Cardiac septum (tissue), 1 donor: ENCODE measurements at regions of chr14 and their contacts with region 1.

Region 1: GRCh38 chr14:66483322-66483721 is 2.8 kb upstream of the CCDC196 start:
- DNase-seq: no peak

Region 2: DNA sequence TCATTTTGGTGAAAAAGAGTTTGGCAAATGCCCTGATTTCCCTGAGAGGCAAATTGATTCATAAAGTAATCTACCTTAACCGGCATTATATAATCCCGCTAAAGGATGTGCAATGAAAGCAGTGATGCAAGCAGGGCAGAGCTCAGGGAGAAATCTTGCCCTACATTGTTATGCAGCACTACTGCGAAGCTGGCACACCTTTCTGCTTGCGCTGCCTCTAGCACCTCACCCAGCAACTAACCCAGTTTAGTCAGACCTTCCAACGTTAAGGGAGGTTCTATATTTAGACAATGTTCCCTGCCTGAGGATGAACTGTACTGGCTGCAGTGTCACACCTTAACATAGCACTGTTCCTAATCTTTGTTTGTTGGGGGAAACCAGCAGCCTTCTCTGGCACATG is 57.9 kb before region 1 on chr14:
- intact Hi-C with region 1: loop called (anchors 10 kb)
- DNase-seq: no peak

Region 3: DNA sequence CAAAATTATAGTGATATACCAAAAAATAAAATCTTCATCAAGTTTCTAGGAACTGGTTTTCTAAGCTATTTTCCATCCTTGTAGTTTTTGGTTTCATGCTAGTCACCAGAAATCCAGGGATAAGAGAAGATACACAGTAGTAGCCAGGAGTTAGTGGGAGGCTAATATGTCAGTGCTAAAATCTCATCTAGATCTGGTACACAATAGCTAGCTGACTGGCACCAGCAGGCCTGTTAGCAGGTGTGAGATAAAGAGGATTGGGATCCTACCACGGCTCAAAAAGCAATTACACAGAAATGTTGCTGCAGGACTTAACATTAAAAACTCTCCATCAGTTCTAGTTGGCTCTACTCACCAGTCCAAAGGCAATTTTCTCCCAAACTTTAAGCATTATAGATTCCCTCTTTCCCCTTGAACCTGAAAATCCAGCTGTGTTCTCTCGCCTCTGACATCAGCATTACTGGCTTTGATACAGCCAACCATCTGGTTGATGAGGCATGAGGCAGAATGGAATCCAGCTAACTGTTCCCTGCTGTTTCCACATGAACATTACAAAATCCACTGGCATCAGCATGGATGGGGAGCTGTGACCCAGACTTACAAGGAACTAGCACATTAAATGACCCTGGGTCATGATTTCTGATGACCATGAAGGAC is 38.9 kb before region 1 on chr14:
- intact Hi-C with region 1: no loop called
- DNase-seq: no peak